Esophagus squamous epithelium (tissue), 5 donors: ENCODE measurements at regions of chr15 and their contacts with region 1.

Region 1: GRCh38 chr15:95259965-95260364 is 1028.6 kb downstream of the MCTP2 start:
- DNase-seq: no peak
- H3K4me3 ChIP-seq: no peak overlapping the region
- H3K27ac ChIP-seq: peak overlapping the region in 3 of 4 donors; percentile 8 to 53 (median 41)
- H3K4me1 ChIP-seq: peaks cover 0 to 26% (median 7%) of the 10 kb centered on the region in 3 donors
- H3K27me3 ChIP-seq: peaks cover 0 to 7% (median 0%) of the 10 kb centered on the region in 4 donors
- CTCF ChIP-seq: no peak
- POLR2A ChIP-seq: no peak

Region 2: DNA sequence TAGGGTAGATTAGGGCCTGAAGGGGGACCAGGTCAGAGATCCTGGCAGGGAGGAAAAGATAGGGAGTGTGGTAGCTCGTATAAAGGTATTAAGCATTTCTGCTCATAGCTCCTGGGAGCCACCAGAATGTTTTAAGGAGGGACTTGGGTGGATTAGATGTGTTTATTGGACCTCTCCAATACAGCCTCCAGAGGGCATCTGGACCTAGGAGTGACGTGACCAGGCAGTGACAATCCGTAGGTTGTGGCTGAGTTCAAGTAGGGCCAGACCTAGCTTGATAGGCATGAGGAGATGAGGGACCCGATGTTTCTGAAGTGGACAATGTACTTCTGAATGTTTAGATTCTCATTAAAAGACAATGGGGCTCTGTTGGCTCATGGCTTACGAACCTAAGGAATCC is 593.4 kb before region 1 on chr15:
- intact Hi-C with region 1: loop called (anchors 10 kb)
- DNase-seq: no peak
- H3K4me3 ChIP-seq: no peak overlapping the region
- H3K27ac ChIP-seq: no peak overlapping the region
- H3K4me1 ChIP-seq: peaks cover 0 to 7% (median 6%) of the 10 kb centered on the region in 3 donors
- H3K27me3 ChIP-seq: peaks cover 0 to 5% (median 0%) of the 10 kb centered on the region in 4 donors
- CTCF ChIP-seq: no peak
- POLR2A ChIP-seq: no peak

Region 3: GRCh38 chr15:95192923-95193322 is 67.0 kb before region 1 on chr15:
- intact Hi-C with region 1: no loop called
- DNase-seq: no peak
- H3K4me3 ChIP-seq: no peak overlapping the region
- H3K27ac ChIP-seq: no peak overlapping the region
- H3K4me1 ChIP-seq: no peaks in the 10 kb centered on the region
- H3K27me3 ChIP-seq: peaks cover 0 to 17% (median 0%) of the 10 kb centered on the region in 4 donors
- CTCF ChIP-seq: no peak
- POLR2A ChIP-seq: no peak

Region 4: GRCh38 chr15:96345560-96346399 is 1085.8 kb after region 1 on chr15:
- intact Hi-C with region 1: loop called (anchors 10 kb)
- DNase-seq: no peak
- H3K4me3 ChIP-seq: peak overlapping the region; percentile 19 to 92 (median 72)
- H3K27ac ChIP-seq: peak overlapping the region; percentile 87 to 97 (median 94)
- H3K4me1 ChIP-seq: peaks cover 0 to 73% (median under 1%) of the 10 kb centered on the region in 3 donors
- H3K27me3 ChIP-seq: peaks cover 0 to 92% (median 0%) of the 10 kb centered on the region in 4 donors
- CTCF ChIP-seq: peak in 5 of 6 experiments; percentile 43 to 72 (median 54)
- POLR2A ChIP-seq: peak in 2 of 4 donors; percentile 29 to 48